BJ (cell line): ENCODE measurements at regions of chr20 and their contacts with region 1.

Region 1: DNA sequence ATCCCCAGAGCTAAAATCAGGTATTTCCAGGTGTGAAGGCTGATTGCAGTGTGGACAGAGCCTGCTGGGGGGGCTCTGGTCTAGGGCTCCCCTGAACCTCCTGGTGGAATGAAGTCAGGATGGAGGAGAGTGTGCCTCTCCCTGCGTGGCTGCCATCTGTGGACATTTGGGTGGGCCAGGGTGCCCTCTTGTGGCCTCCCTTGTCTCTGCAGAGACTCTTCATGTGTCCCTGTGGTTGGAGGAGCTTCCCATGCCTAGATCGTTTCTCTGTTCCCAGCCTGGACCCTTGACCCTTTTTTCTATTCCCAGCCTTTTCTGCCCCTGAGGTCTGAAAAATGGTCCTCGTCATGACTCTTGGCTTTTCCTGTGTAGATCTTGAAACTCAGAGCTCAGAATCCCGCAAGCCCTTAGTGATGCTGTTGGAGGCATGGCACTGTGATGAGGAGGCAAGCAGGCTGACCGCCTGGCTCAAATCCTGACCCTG is 9.9 kb upstream of the PSMF1 start:
- DNase-seq: no peak
- H3K4me3 ChIP-seq: no peak overlapping the region
- H3K27me3 ChIP-seq: no peaks in the 10 kb centered on the region; the same call in none of the 2 replicates
- CTCF ChIP-seq: peak; percentile 89

Region 2: GRCh38 chr20:208942-209566 is 899.4 kb before region 1 on chr20:
- CTCF ChIA-PET with region 1: no interaction called
- POLR2A ChIA-PET with region 1: no interaction called
- DNase-seq: peak; percentile 11
- H3K4me3 ChIP-seq: no peak overlapping the region
- H3K27me3 ChIP-seq: no peaks in the 10 kb centered on the region; the same call in 1 of the 2 replicates
- CTCF ChIP-seq: peak; percentile 70

Region 3: DNA sequence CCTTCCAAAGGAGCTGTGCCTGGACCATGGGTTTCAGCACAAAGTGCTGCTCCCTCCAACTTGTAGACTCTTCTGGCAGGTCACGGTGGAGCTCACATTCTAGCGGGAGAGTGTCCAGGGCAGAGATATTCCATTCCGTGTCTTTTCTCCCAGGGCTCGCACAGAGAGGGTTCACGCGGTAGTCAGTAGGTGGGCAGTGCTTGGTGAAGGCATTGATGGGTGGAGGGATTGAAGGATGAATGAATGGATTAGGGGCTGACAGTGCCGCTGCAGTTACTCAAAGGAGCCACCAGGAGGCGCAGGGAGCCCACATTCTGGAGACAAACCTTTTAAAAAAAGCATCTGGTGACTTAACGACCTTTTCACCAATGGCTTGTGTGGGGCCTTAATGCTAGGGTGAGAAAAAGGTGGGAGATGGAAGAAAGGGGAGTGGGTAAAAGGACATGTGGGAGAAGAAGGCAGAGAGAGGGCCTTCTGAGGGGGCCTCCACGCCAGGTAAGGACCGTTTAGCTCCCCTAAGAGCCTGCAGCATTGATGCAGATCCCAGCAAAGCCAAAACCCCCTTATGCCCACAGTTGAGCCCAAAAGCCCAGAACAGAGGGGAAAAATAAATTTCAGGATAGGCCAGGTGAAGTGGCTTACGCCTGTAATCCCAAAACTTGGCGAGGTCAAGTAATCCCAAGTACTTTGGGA is 292.4 kb before region 1 on chr20:
- CTCF ChIA-PET with region 1: interaction called, 19 read pairs
- POLR2A ChIA-PET with region 1: no interaction called
- DNase-seq: no peak
- H3K4me3 ChIP-seq: no peak overlapping the region
- H3K27me3 ChIP-seq: no peaks in the 10 kb centered on the region
- CTCF ChIP-seq: peak; percentile 97

Region 4: GRCh38 chr20:1094751-1095150 is 13.7 kb before region 1 on chr20:
- CTCF ChIA-PET with region 1: interaction called, 24 read pairs
- POLR2A ChIA-PET with region 1: no interaction called
- DNase-seq: no peak
- H3K4me3 ChIP-seq: no peak overlapping the region
- H3K27me3 ChIP-seq: peaks cover 3% of the 10 kb centered on the region; the same call in 1 of the 2 replicates
- CTCF ChIP-seq: no peak

Region 5: GRCh38 chr20:1118336-1119127 is 10.1 kb after region 1 on chr20 and contains the start of gene PSMF1:
- CTCF ChIA-PET with region 1: interaction called, 20 read pairs
- POLR2A ChIA-PET with region 1: no interaction called
- DNase-seq: peak; percentile 42
- H3K4me3 ChIP-seq: peak within 1 kb of the TSS; percentile 67
- H3K27me3 ChIP-seq: no peaks in the 10 kb centered on the region
- CTCF ChIP-seq: no peak
- polyA plus RNA-seq, gene PSMF1: 87.5 and 154 TPM in 2 replicates